ENCODE measurements at regions of chr1 and their contacts with region 1.

Region 1: DNA sequence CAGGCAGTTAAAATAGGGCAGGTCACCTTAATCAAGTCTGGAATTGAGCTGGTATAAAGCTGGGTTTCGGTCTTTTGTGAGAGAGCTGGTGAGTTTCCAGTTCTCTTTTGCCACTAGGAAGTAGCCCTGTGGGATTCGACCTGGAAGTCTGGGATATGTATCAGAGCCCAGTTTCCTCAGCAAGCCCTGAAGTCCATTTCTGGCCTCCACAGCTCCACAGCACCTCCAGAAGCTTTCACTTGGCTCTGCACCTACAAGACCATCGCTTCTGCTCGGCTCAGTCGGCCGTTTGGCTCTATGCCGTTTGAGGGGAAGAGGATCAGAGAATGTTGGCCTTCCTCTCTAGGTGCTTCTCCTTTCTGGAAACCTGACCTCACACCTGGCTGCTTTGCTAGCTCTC is 148.0 kb downstream of the GALNT2 start:
- DNase-seq: peak; percentile 53 to 75
- ATAC-seq: peak; percentile 78 to 94 (median 90)
- H3K4me3 ChIP-seq: peak overlapping the region in 2 of 10 donors; percentile 6 to 18
- H3K27ac ChIP-seq: peak overlapping the region in 9 of 10 donors; percentile 1 to 77 (median 50)
- H3K4me1 ChIP-seq: peaks cover 7 to 59% (median 36%) of the 10 kb centered on the region in 9 donors
- H3K27me3 ChIP-seq: no peaks in the 10 kb centered on the region
- CTCF ChIP-seq: peak; percentile 45 to 88 (median 74)

Region 2: GRCh38 chr1:229661022-229661877 is 553.8 kb before region 1 on chr1:
- intact Hi-C with region 1: loop called in 5 of 10 experiments (anchors 5 to 10 kb)
- DNase-seq: peak; percentile 75 to 82
- ATAC-seq: peak; percentile 86 to 94 (median 91)
- H3K4me3 ChIP-seq: no peak overlapping the region
- H3K27ac ChIP-seq: no peak overlapping the region
- H3K4me1 ChIP-seq: peaks cover 0 to 15% (median 3%) of the 10 kb centered on the region in 9 donors
- H3K27me3 ChIP-seq: no peaks in the 10 kb centered on the region
- CTCF ChIP-seq: peak; percentile 85 to 96 (median 91)

Region 3: GRCh38 chr1:229947968-229948367 is 267.1 kb before region 1 on chr1:
- intact Hi-C with region 1: no loop called
- DNase-seq: no peak
- ATAC-seq: no peak
- H3K4me3 ChIP-seq: no peak overlapping the region
- H3K27ac ChIP-seq: no peak overlapping the region
- H3K4me1 ChIP-seq: no peaks in the 10 kb centered on the region
- H3K27me3 ChIP-seq: no peaks in the 10 kb centered on the region
- CTCF ChIP-seq: no peak

Region 4: GRCh38 chr1:230011333-230012092 is 203.5 kb before region 1 on chr1:
- intact Hi-C with region 1: no loop called
- DNase-seq: no peak
- ATAC-seq: no peak
- H3K4me3 ChIP-seq: no peak overlapping the region
- H3K27ac ChIP-seq: no peak overlapping the region
- H3K4me1 ChIP-seq: peaks cover 0 to 7% (median 0%) of the 10 kb centered on the region in 9 donors
- H3K27me3 ChIP-seq: no peaks in the 10 kb centered on the region
- CTCF ChIP-seq: no peak

Region 5: DNA sequence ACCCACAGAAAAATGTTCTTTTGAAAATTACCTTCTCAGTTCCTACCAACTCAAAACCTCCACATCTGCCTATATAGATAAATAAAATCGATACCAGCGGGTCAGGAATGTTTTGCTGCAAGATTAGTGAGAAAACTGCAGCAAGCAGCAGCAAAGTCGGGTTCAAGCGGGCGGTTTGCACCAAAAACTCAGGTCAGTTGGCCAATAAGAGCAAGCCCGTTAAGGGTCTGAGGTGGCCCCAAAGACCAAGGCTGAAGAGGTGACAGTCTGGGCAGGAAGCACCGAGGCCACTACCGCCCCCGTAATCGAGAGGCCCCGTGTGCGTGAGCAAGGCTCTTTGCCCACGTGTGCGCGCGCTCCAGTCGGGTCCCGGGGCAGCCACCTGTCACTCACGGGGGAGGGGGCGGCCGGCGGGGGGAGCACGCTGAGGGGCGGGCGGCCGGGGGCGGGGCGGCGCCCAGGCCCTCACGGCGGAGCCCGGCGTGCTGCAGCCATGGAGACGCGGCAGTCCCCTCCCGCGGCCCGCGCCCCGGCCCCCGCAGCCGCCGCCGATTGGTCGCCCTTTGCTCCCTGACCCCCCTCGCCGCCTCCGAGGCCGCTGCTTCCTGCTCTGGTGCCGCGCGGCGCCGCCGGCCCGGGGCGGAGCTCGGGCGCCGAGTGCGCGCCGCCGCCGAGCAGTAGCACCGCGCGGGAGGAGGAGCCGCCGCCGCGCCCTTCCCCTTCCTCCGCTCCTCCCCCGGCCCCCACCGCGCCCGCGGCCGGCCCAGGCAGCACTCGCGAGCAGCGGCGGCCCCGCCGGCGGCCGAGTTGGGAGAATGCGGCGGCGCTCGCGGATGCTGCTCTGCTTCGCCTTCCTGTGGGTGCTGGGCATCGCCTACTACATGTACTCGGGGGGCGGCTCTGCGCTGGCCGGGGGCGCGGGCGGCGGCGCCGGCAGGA is 148.3 kb before region 1 on chr1 and contains the start of gene GALNT2:
- intact Hi-C with region 1: loop called in 5 of 10 experiments (anchors 2 to 10 kb)
- DNase-seq: peak; percentile 87 to 90
- ATAC-seq: peak; percentile 92 to 98 (median 95)
- H3K4me3 ChIP-seq: peak within 1 kb of the TSS; percentile 65 to 97 (median 89)
- H3K27ac ChIP-seq: peak within 1 kb of the TSS; percentile 85 to 97 (median 92)
- H3K4me1 ChIP-seq: peaks cover 4 to 46% (median 27%) of the 10 kb centered on the region in 9 donors
- H3K27me3 ChIP-seq: no peaks in the 10 kb centered on the region
- CTCF ChIP-seq: no peak
- total RNA-seq, gene GALNT2: 21.3 to 35.1 (median 25.8) TPM

Region 6: DNA sequence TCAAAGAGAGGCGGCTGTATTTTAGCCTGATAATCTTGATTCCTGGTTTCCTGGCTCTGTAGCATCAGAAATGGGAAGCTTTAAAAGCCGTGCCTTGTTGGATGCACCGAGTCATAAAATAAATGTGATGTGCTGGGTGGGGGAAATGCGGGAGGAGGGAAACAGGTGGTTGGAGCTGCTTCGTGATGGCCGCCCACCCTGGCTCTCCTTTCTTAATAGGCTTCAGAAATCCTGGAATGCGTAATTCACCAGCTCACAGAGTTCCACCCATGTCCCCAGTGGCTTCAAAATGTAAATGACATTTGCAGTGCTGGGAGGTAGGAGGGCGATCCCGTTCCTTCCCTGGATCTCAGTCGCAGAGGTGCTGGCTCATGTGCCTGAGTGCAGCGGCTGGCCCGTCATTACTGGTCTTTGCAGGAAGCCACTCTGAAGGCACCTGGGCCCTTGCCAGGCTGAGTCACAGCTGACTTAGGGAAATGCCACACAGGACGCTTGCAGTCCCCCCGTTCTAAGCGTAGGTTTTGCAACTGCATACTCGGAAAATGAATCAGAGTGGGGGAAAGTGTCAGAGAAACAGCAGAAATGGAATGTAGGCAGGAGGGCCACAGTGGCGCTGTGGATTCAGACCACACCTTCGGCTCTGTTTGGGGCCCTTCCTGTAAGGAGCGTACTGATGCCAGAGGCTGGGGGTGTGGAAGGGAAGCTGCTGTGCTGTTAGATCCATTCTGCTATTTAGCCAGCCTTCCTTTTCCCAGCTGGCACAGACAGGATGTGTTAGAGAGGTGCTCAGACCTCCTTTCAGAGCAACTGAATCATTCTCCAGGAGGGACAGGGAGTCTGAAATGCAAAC is 110.4 kb before region 1 on chr1:
- intact Hi-C with region 1: loop called in 1 of 10 experiments (anchors 10 kb)
- DNase-seq: peak; percentile 87 to 90
- ATAC-seq: peak; percentile 80 to 97 (median 93)
- H3K4me3 ChIP-seq: peak overlapping the region in 5 of 10 donors; percentile 7 to 33 (median 13)
- H3K27ac ChIP-seq: peak overlapping the region in 6 of 10 donors; percentile 26 to 87 (median 59)
- H3K4me1 ChIP-seq: peaks cover 8 to 59% (median 45%) of the 10 kb centered on the region in 9 donors
- H3K27me3 ChIP-seq: no peaks in the 10 kb centered on the region
- CTCF ChIP-seq: no peak

Region 7: DNA sequence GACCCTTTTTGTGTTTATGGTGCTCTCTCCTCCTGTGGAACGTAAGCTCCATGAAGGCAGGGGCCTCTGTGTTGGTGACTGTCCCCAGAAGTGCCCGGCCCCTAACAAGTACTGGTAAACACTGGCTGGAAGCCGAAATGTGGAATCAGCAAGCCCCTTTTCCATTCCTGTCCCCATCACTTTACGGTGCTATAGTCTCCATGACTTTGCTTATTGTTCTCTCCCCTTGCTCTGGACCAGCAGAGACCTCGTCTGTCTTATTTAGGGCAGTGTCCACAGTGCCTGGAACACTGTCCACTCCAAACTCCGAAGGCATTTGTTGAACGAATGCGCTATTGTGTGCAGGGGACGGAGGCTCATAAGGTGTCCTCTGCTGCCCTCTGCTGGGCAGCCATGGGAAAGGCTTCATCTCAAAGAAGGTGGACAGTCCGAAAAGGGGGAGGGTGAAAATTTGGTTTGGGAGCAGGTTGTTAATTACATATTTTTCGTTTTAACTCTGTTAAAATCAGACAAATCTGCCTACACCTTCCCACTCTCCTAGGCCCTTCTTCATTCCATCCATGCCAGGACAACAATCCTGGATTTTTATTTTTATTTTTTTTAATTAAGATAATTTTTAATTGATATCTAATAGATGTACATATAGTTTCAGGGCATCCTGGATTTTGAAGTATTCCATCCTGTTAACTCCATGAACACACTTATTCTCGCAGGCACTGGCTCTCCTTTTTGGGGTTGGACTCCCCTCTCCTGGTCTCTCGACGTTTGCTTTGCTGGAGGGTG is 95.5 kb after region 1 on chr1:
- intact Hi-C with region 1: loop called in 1 of 10 experiments (anchors 10 kb)
- DNase-seq: peak; percentile 72 to 74
- ATAC-seq: peak; percentile 82 to 94 (median 89)
- H3K4me3 ChIP-seq: no peak overlapping the region
- H3K27ac ChIP-seq: no peak overlapping the region
- H3K4me1 ChIP-seq: peaks cover 0 to 19% (median 8%) of the 10 kb centered on the region in 9 donors
- H3K27me3 ChIP-seq: peaks cover 0 to 18% (median 0%) of the 10 kb centered on the region in 7 donors
- CTCF ChIP-seq: peak; percentile 87 to 97 (median 95)

Measured in heart right ventricle (tissue), 16 donors.